ENCODE measurements at regions of chr5 and their contacts with region 1.

Region 1: GRCh38 chr5:95781101-95781583 is 41.4 kb downstream of the GLRX start:
- DNase-seq: peak; percentile 73 to 85
- ATAC-seq: peak; percentile 100
- H3K4me3 ChIP-seq: no peak overlapping the region
- H3K27ac ChIP-seq: peak overlapping the region; percentile 50 to 65
- H3K4me1 ChIP-seq: peaks cover 7% of the 10 kb centered on the region; the same call in 2 of the 3 replicates
- CTCF ChIP-seq: peak; percentile 100
- EP300 ChIP-seq: no peak
- POLR2A ChIP-seq: no peak
- RAD21 ChIP-seq: peak; percentile 95 to 99

Region 2: DNA sequence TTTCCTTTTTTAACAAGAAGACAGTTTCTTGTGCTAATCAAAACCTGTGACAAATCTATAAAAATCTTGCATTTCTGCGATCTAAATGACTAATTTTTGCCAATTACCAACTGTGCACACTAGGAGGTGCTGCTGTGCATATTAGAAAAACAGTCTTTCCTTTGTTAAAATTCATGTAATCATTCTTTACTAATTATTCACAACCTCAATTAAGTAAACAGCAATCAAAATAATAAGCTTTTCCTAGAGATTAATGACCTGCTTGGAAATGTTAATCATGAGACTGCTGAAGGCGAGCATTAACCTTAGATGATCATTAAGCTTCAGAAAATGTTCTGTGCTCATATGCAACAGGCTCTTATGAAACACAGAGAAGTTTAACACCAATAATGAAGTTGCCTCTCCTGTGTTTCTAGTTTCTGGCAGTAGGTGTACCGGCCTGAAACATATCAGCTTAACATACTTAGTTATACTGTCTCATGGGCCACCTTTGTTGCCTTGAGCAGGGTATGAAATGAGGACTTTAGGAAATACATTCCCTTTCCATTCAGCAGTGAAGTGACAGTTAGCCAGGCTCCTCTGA is 116.8 kb before region 1 on chr5:
- CTCF ChIA-PET with region 1: interaction called, 18 read pairs
- POLR2A ChIA-PET with region 1: no interaction called
- DNase-seq: no peak
- ATAC-seq: no peak
- H3K4me3 ChIP-seq: no peak overlapping the region
- H3K27ac ChIP-seq: peak overlapping the region in 1 of 2 experiments; percentile 18; a peak in 1 of 6 replicates
- H3K4me1 ChIP-seq: peaks cover 3% of the 10 kb centered on the region; the same call in 1 of the 3 replicates
- CTCF ChIP-seq: peak; percentile 88
- EP300 ChIP-seq: no peak
- POLR2A ChIP-seq: no peak
- RAD21 ChIP-seq: peak; percentile 70 to 76

Region 3: GRCh38 chr5:95761771-95762651 is 19.1 kb before region 1 on chr5:
- CTCF ChIA-PET with region 1: interaction called, 12 read pairs
- POLR2A ChIA-PET with region 1: no interaction called
- DNase-seq: no peak
- ATAC-seq: no peak
- H3K4me3 ChIP-seq: no peak overlapping the region
- H3K27ac ChIP-seq: peak overlapping the region; percentile 45 to 63; a peak in 4 of 6 replicates
- H3K4me1 ChIP-seq: peaks cover 45% of the 10 kb centered on the region
- CTCF ChIP-seq: no peak
- EP300 ChIP-seq: no peak
- POLR2A ChIP-seq: no peak
- RAD21 ChIP-seq: no peak

Region 4: GRCh38 chr5:95801532-95801931 is 20.4 kb after region 1 on chr5:
- CTCF ChIA-PET with region 1: interaction called, 44 read pairs
- POLR2A ChIA-PET with region 1: no interaction called
- DNase-seq: no peak
- ATAC-seq: no peak
- H3K4me3 ChIP-seq: no peak overlapping the region
- H3K27ac ChIP-seq: peak overlapping the region; percentile 73 to 82
- H3K4me1 ChIP-seq: peaks cover 57% of the 10 kb centered on the region
- CTCF ChIP-seq: no peak
- EP300 ChIP-seq: no peak
- POLR2A ChIP-seq: no peak
- RAD21 ChIP-seq: no peak

Region 5: DNA sequence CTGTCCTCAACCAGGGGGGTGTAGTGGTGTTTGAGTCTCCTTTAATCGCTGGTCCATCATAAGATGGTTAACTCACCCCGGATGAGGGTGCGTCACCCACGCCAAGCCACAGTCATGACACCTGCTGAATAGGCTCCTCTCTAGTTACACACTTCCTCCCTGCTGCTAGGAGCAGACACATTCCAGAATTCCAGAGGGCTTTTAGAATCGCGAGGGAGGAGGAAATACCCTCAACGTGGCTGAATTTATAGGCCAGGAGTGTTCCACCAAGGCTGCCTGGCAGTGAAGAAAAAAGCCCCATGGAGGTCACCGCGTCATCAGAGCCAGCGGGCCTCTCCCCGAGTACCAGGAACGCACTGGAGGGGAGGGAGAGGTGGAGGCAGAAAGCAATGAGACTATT is 36.3 kb after region 1 on chr5:
- CTCF ChIA-PET with region 1: interaction called, 20 read pairs
- POLR2A ChIA-PET with region 1: interaction called, 20 read pairs
- DNase-seq: no peak
- ATAC-seq: no peak
- H3K4me3 ChIP-seq: no peak overlapping the region
- H3K27ac ChIP-seq: no peak overlapping the region; a peak in 1 of 6 replicates
- H3K4me1 ChIP-seq: peaks cover 45% of the 10 kb centered on the region; the same call in 2 of the 3 replicates
- CTCF ChIP-seq: no peak
- EP300 ChIP-seq: no peak
- POLR2A ChIP-seq: no peak
- RAD21 ChIP-seq: no peak

Region 6: GRCh38 chr5:95835682-95836385 is 54.7 kb after region 1 on chr5:
- CTCF ChIA-PET with region 1: interaction called, 469 read pairs
- POLR2A ChIA-PET with region 1: interaction called, 18 read pairs
- DNase-seq: no peak
- ATAC-seq: no peak
- H3K4me3 ChIP-seq: peak overlapping the region; percentile 49
- H3K27ac ChIP-seq: peak overlapping the region; percentile 97 to 100
- H3K4me1 ChIP-seq: peaks cover 39% of the 10 kb centered on the region
- CTCF ChIP-seq: no peak
- EP300 ChIP-seq: no peak
- POLR2A ChIP-seq: no peak
- RAD21 ChIP-seq: no peak

Region 7: GRCh38 chr5:96336351-96336985 is 555.3 kb after region 1 on chr5:
- CTCF ChIA-PET with region 1: interaction called, 22 read pairs
- POLR2A ChIA-PET with region 1: no interaction called
- DNase-seq: peak; percentile 48 to 88
- ATAC-seq: peak; percentile 88 to 95
- H3K4me3 ChIP-seq: no peak overlapping the region
- H3K27ac ChIP-seq: peak overlapping the region; percentile 70 to 75
- H3K4me1 ChIP-seq: peaks cover 46% of the 10 kb centered on the region
- CTCF ChIP-seq: peak; percentile 90
- EP300 ChIP-seq: no peak
- POLR2A ChIP-seq: no peak
- RAD21 ChIP-seq: peak; percentile 97 to 98